ENCODE measurements at regions of chr10 and their contacts with region 1.

Region 1: DNA sequence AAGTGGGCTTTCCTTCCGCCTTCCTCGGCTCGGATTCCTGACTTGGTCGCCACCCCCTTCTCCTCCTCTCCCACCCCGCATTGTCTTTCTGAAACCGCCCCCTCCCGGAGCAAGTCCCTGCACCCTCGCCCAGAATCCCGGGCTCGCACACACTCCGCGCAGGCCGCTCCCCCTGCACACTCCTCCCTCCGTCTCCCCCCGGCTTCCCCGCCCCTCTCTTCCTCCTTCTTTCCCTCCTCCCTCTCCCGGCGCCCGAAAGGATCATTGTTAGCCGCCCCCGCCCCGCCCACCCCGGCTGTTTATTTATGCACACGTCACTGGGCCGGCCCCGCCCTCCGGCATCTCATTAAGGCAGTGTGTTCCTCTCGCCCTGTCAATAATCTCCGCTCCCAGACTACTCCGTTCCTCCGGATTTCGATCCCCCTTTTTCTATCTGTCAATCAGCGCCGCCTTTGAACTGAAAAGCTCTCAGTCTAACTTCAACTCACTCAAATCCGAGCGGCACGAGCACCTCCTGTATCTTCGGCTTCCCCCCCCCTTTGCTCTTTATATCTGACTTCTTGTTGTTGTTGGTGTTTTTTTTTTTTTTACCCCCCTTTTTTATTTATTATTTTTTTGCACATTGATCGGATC is at the start of gene TCF7L2:
- DNase-seq: peak; percentile 96 to 99
- H3K4me3 ChIP-seq: peak within 1 kb of the TSS; percentile 87
- H3K4me3 Mint-ChIP-seq: peak within 1 kb of the TSS; percentile 90
- H3K27ac Mint-ChIP-seq: peak within 1 kb of the TSS; percentile 94
- H3K4me1 ChIP-seq: peaks cover 44% of the 10 kb centered on the region
- H3K4me1 Mint-ChIP-seq: peaks cover 33% of the 10 kb centered on the region
- H3K27me3 ChIP-seq: no peaks in the 10 kb centered on the region
- H3K27me3 Mint-ChIP-seq: no peaks in the 10 kb centered on the region
- CTCF ChIP-seq: no peak
- total RNA-seq, gene TCF7L2: 45.4 and 50.9 TPM in 2 replicates

Region 2: GRCh38 chr10:112565434-112566053 is 384.4 kb before region 1 on chr10:
- CTCF ChIA-PET with region 1: no interaction called
- POLR2A ChIA-PET with region 1: no interaction called
- intact Hi-C with region 1: loop called (anchors 2 kb)
- DNase-seq: peak; percentile 51 to 79
- H3K4me3 ChIP-seq: no peak overlapping the region
- H3K4me3 Mint-ChIP-seq: no peak overlapping the region
- H3K27ac Mint-ChIP-seq: no peak overlapping the region
- H3K4me1 ChIP-seq: no peaks in the 10 kb centered on the region
- H3K4me1 Mint-ChIP-seq: no peaks in the 10 kb centered on the region
- H3K27me3 ChIP-seq: no peaks in the 10 kb centered on the region
- H3K27me3 Mint-ChIP-seq: no peaks in the 10 kb centered on the region
- CTCF ChIP-seq: peak; percentile 67 to 75

Region 3: GRCh38 chr10:112775381-112775780 is 174.6 kb before region 1 on chr10:
- CTCF ChIA-PET with region 1: no interaction called
- POLR2A ChIA-PET with region 1: interaction called, 4 read pairs
- intact Hi-C with region 1: loop called (anchors 5 kb)
- DNase-seq: peak in 1 of 2 experiments; percentile 33
- H3K4me3 ChIP-seq: no peak overlapping the region
- H3K4me3 Mint-ChIP-seq: no peak overlapping the region
- H3K27ac Mint-ChIP-seq: no peak overlapping the region
- H3K4me1 ChIP-seq: peaks cover 59% of the 10 kb centered on the region
- H3K4me1 Mint-ChIP-seq: peaks cover 43% of the 10 kb centered on the region
- H3K27me3 ChIP-seq: no peaks in the 10 kb centered on the region
- H3K27me3 Mint-ChIP-seq: no peaks in the 10 kb centered on the region
- CTCF ChIP-seq: peak; percentile 32 to 34

Region 4: DNA sequence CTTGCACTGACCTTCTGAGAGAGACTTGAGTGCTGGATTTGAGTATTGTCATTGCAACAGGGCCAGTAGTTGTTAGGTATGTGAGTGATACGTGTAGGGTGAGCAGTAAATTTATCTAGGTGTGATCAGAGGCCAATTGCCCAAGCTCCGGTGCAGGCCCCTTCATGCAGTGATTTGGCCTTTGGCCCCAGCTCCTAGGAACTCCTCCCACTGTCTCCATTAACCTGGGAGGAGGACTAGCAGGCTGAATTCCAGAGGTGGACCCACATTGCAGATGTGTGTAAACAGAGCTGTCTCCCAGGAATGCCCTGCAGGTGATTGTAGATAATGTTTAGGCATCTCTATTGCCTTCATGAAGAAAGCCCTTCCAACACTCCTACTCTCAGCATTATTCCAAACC is 19.6 kb after region 1 on chr10:
- CTCF ChIA-PET with region 1: interaction called, 3 read pairs
- POLR2A ChIA-PET with region 1: interaction called, 8 read pairs
- intact Hi-C with region 1: loop called (anchors 1 kb)
- DNase-seq: peak; percentile 82 to 92
- H3K4me3 ChIP-seq: no peak overlapping the region
- H3K4me3 Mint-ChIP-seq: no peak overlapping the region
- H3K27ac Mint-ChIP-seq: peak overlapping the region; percentile 45
- H3K4me1 ChIP-seq: peaks cover 36% of the 10 kb centered on the region
- H3K4me1 Mint-ChIP-seq: peaks cover 45% of the 10 kb centered on the region
- H3K27me3 ChIP-seq: no peaks in the 10 kb centered on the region
- H3K27me3 Mint-ChIP-seq: no peaks in the 10 kb centered on the region
- CTCF ChIP-seq: no peak

Region 5: DNA sequence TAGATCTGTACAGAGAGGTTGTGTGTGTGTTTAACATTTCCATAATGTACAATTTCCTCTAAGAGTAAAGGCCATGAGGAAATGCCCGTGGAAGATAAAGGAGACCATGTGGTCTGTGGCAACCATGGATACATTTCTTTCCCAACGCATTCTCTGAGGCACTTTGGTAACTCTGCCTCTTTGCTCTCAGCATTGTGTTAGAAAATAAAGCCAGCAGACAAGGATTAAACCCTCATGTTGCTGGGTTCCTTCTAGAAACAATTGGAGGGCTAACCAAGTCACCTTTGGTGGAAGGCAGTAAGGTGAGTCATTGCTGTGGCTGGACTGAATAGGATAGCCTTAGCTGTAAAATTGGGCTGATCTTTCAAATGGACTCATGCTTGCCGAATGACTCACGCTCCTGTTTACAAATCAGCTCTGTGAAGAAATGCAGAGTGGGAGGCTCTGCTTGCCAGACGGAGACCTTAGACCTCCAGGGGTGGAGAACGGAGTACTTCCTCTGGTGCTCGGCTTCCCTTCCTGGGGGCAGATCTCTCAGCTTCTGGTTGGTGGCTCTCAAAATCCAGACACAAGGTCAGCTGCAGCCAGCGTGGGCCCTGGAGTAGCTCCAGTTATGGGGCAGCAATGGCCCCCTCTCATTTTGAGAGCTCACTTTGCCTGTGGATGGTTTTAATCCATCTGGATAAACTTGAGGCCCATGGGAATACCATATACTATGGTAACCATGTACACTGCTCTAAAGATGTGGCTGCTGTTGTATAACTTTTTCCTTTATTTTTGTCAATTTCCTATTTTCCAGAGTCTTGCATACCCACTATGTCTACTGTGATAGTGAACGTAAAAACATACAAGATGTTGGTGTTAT is 137.4 kb after region 1 on chr10:
- CTCF ChIA-PET with region 1: no interaction called
- POLR2A ChIA-PET with region 1: no interaction called
- intact Hi-C with region 1: loop called (anchors 5 kb)
- DNase-seq: peak; percentile 81 to 87
- H3K4me3 ChIP-seq: no peak overlapping the region
- H3K4me3 Mint-ChIP-seq: peak overlapping the region; percentile 28
- H3K27ac Mint-ChIP-seq: peak overlapping the region; percentile 81
- H3K4me1 ChIP-seq: peaks cover 31% of the 10 kb centered on the region
- H3K4me1 Mint-ChIP-seq: peaks cover 33% of the 10 kb centered on the region
- H3K27me3 ChIP-seq: no peaks in the 10 kb centered on the region
- H3K27me3 Mint-ChIP-seq: no peaks in the 10 kb centered on the region
- CTCF ChIP-seq: no peak

Measured in Caco-2 (cell line).